HepG2 (cell line): ENCODE measurements at regions of chr7 and their contacts with region 1.

Region 1: DNA sequence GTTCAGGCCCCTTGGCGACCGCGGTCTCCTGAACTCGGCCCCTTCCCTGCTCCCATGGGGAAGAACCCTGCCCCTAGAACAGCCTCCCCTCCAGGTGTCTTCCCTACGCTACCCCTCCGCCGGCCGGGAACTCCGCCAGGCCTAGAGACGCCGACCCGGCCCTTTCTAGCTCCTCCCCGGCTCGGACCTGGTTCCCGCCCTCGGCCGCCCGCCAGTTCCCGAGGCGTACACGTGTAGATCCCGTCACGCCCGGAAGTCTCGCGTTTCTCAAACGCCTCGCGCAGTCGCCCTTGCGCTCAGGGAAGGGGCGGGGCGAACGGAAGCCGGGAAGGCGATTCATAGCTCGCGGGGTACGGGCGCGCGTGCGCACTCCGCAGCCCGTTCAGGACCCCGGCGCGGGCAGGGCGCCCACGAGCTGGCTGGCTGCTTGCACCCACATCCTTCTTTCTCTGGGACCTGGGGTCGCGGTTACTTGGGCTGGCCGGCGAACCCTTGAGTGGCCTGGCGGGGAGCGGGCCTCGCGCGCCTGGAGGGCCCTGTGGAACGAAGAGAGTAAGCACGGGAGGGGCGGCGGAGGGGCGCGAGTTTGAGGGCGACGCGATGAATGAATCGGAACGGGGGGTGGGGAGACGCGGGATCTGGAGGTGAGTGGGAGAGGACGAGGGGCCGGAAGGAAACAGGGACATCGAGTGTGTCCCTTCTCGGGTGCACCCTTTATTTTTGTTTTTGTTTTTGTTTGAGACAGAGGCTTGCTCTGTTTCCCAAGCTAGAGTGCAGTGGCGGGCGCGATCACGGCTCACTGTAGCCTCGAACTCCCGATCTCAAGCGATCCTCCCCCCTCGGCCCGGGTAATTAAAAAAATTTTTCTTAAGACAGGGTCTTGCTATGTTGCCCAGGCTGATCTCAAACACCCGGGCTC is at the start of gene POP7:
- DNase-seq: peak; percentile 94
- ATAC-seq: peak; percentile 93
- H3K4me3 ChIP-seq: peak within 1 kb of the TSS; percentile 93 to 98 (median 98)
- H3K27ac ChIP-seq: peak within 1 kb of the TSS; percentile 84
- H3K4me1 ChIP-seq: peaks cover 30% of the 10 kb centered on the region
- H3K27me3 ChIP-seq: no peaks in the 10 kb centered on the region
- CTCF ChIP-seq: no peak
- EP300 ChIP-seq: no peak
- POLR2A ChIP-seq: peak; percentile 51 to 89
- RAD21 ChIP-seq: no peak
- total RNA-seq, gene POP7: 91.1 and 91.5 TPM in 2 replicates

Region 2: DNA sequence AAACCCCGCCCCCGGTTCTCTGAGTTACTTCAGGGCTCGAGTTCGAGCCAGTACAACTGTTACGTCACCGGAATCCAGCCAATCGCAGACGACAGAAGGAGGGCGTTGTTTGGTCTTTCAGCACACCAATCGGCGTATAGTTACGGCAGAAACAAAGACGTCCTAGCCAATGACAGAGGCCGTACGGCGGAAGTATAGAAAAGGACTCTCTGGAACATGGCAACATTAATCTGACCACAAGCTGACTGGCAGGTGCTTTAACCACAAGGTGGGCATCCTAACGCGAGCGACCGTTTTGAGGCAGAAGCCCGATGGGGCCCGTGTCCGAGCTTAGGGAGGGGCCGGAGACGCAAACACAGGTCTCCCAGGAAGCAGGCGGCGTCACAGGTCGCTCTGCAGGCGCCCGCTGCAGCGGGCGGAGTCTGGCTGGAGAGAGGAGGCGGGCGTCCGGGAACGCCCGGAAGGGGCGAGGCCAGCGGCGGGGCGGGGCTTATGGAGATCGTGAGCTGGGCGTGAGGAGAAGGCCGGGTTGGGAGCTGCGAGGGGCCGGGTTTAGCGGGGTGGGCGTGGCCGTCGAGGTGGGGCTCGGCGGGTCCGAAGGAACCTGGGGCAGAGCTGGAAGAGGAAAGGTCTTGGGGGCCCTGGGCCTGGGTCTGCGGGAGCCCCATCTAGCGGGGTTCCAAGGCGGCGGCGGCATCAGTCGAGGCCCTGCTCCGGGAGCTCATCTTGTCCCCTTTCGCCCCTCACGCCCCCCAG is 93.9 kb before region 1 on chr7 and contains the start of gene MOSPD3:
- CTCF ChIA-PET with region 1: interaction called, 3 read pairs
- POLR2A ChIA-PET with region 1: interaction called, 11 read pairs
- in situ Hi-C with region 1: no loop called
- intact Hi-C with region 1: no loop called
- DNase-seq: peak; percentile 99
- ATAC-seq: peak; percentile 94
- H3K4me3 ChIP-seq: peak within 1 kb of the TSS; percentile 61 to 81 (median 77)
- H3K27ac ChIP-seq: peak within 1 kb of the TSS; percentile 95
- H3K4me1 ChIP-seq: peaks cover 29% of the 10 kb centered on the region
- H3K27me3 ChIP-seq: no peaks in the 10 kb centered on the region
- CTCF ChIP-seq: no peak
- EP300 ChIP-seq: no peak
- POLR2A ChIP-seq: peak; percentile 60 to 78
- RAD21 ChIP-seq: no peak
- total RNA-seq, gene MOSPD3: 6.1 and 7.6 TPM in 2 replicates

Region 3: GRCh38 chr7:100691676-100692577 is 14.1 kb before region 1 on chr7:
- CTCF ChIA-PET with region 1: no interaction called
- POLR2A ChIA-PET with region 1: interaction called, 18 read pairs
- in situ Hi-C with region 1: no loop called
- intact Hi-C with region 1: no loop called
- DNase-seq: peak; percentile 72
- ATAC-seq: peak; percentile 88
- H3K4me3 ChIP-seq: peak overlapping the region; percentile 93 to 97 (median 96); a peak in 5 of 6 replicates
- H3K27ac ChIP-seq: peak overlapping the region; percentile 34
- H3K4me1 ChIP-seq: peaks cover 34% of the 10 kb centered on the region
- H3K27me3 ChIP-seq: no peaks in the 10 kb centered on the region
- CTCF ChIP-seq: peak; percentile 95
- EP300 ChIP-seq: no peak
- POLR2A ChIP-seq: no peak
- RAD21 ChIP-seq: peak; percentile 73

Region 4: GRCh38 chr7:100726996-100727761 is 21.2 kb after region 1 on chr7:
- CTCF ChIA-PET with region 1: interaction called, 37 read pairs
- POLR2A ChIA-PET with region 1: interaction called, 59 read pairs
- in situ Hi-C with region 1: no loop called
- intact Hi-C with region 1: loop called (anchors 1 kb)
- DNase-seq: peak; percentile 32
- ATAC-seq: no peak; the same call in 2 of the 3 replicates
- H3K4me3 ChIP-seq: no peak overlapping the region
- H3K27ac ChIP-seq: no peak overlapping the region
- H3K4me1 ChIP-seq: peaks cover 88% of the 10 kb centered on the region
- H3K27me3 ChIP-seq: no peaks in the 10 kb centered on the region; a peak in 1 of 5 replicates
- CTCF ChIP-seq: no peak
- EP300 ChIP-seq: peak in 1 of 2 experiments; percentile 27; a peak in 1 of 4 replicates
- POLR2A ChIP-seq: no peak
- RAD21 ChIP-seq: no peak

Region 5: DNA sequence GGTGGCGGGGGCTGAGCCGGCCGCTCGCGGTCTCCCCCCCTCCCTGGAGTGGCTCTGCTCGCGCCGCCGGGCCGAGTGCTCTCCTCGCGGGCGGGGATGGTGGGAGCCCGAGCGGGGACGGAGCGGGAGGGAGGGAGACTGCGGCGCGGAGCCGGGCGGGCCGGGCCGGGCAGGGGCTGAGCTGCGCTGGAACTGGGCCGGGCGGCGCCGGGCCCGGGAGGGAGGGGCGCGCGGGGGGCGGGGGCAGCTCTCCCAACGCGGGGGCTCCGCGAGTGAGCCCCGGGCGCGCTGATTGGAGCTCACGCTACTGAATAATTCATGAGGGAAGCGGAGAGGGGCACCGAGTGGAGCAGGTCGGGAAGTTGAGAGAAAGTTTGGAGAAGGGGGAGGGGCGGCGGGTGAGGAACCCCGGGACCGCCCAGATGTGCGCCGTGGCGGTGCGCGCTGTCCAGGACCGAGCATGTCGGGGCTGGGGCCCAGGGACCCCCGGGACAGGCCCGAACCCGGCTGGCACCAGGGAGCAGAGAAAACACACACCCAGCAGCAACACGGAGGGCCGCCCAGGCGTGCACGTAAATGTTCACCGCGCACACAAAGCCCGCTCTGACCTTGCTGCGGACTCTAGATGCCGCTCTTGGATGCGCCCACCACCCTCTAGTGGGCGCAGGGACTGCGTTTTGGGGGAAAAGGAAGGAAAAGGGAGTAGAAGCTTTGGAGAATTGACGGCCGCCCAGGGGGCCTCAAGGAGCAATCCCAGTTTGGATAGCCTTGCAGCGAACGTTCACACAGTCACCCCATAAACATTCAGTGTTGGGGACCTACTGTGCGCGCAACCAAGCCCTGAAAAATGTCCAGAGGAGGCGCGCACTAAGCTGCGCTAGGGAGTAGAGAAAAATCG is 121.6 kb after region 1 on chr7 and contains the start of gene EPHB4:
- CTCF ChIA-PET with region 1: no interaction called
- POLR2A ChIA-PET with region 1: interaction called, 17 read pairs
- in situ Hi-C with region 1: no loop called
- intact Hi-C with region 1: no loop called
- DNase-seq: peak; percentile 90
- ATAC-seq: peak; percentile 81
- H3K4me3 ChIP-seq: peak within 1 kb of the TSS; percentile 81 to 90 (median 87)
- H3K27ac ChIP-seq: peak within 1 kb of the TSS; percentile 69
- H3K4me1 ChIP-seq: peaks cover 71% of the 10 kb centered on the region
- H3K27me3 ChIP-seq: no peaks in the 10 kb centered on the region; a peak in 2 of 5 replicates
- CTCF ChIP-seq: peak; percentile 85
- EP300 ChIP-seq: no peak
- POLR2A ChIP-seq: peak; percentile 51 to 73
- RAD21 ChIP-seq: peak; percentile 67; the same call in 1 of the 2 replicates
- total RNA-seq, gene EPHB4: 43.7 and 69.6 TPM in 2 replicates

Region 6: DNA sequence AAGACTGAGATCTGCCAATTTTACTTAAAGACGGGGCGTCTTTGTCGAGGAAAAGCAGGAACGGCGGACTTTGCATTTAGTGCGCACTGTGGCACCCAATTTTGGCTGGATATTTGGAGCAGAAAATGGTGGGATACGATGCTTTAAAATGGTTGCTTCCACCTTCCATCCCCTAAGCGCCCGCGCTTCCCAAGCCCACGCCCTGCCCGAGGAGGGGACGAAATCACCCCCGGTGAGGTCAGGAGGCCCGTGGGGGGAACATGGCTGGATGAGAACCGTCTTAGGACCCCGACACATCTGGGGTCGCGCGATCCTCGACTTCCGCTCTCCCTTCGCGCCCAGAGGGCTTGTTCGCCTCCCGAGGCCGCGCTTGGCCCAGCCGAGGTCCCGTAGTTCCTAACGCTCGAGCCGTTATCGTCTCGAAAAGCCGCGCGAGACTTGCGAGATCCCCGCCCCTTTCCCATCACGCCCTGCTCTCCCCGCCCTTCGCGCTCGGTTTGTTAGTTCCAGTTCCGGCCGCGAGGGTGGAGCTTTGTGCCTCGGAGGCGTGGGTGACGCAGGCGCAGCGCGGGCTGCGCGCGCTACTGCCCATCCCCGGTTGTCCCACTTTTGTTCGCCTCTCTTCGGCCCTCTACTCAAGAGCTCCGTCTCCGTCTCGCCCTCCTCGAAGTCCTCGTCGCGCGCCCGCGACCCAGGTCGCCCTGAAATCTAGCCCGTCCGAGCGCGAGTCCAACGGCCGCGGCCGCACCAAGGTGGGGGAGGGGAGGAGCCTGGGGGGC is 168.8 kb after region 1 on chr7 and contains the start of gene SRRT:
- CTCF ChIA-PET with region 1: no interaction called
- POLR2A ChIA-PET with region 1: interaction called, 13 read pairs
- in situ Hi-C with region 1: no loop called
- intact Hi-C with region 1: loop called (anchors 1 kb)
- DNase-seq: peak; percentile 94
- ATAC-seq: peak; percentile 94
- H3K4me3 ChIP-seq: peak within 1 kb of the TSS; percentile 84 to 89 (median 86)
- H3K27ac ChIP-seq: peak within 1 kb of the TSS; percentile 87
- H3K4me1 ChIP-seq: peaks cover 45% of the 10 kb centered on the region
- H3K27me3 ChIP-seq: peaks cover 0 to 2% of the 10 kb centered on the region in 2 experiments; a peak in 1 of 5 replicates
- CTCF ChIP-seq: peak; percentile 16
- EP300 ChIP-seq: peak in 1 of 2 experiments; percentile 29; a peak in 1 of 4 replicates
- POLR2A ChIP-seq: peak; percentile 91 to 98
- RAD21 ChIP-seq: no peak; the same call in 1 of the 2 replicates
- total RNA-seq, gene SRRT: 79.1 and 106 TPM in 2 replicates